Gastrocnemius medialis (tissue), 4 donors: ENCODE measurements at regions of chr3 and their contacts with region 1.

Region 1: GRCh38 chr3:125079675-125080045 is 23.9 kb upstream of the HEG1 start:
- DNase-seq: no peak
- ATAC-seq: peak; percentile 89 to 92
- H3K4me3 ChIP-seq: no peak overlapping the region
- H3K27ac ChIP-seq: peak overlapping the region; percentile 51 to 73 (median 60)
- H3K4me1 ChIP-seq: peaks cover 0 to 4% of the 10 kb centered on the region in 2 donors
- H3K27me3 ChIP-seq: no peaks in the 10 kb centered on the region
- CTCF ChIP-seq: no peak
- POLR2A ChIP-seq: no peak

Region 2: GRCh38 chr3:125024817-125025216 is 54.8 kb before region 1 on chr3:
- in situ Hi-C with region 1: no loop called
- intact Hi-C with region 1: loop called (anchors 2 kb)
- DNase-seq: peak; percentile 82 to 91
- ATAC-seq: peak; percentile 98 to 99
- H3K4me3 ChIP-seq: no peak overlapping the region
- H3K27ac ChIP-seq: peak overlapping the region; percentile 40 to 75 (median 58)
- H3K4me1 ChIP-seq: peaks cover 17 to 30% of the 10 kb centered on the region in 2 donors
- H3K27me3 ChIP-seq: no peaks in the 10 kb centered on the region
- CTCF ChIP-seq: no peak
- POLR2A ChIP-seq: no peak

Region 3: DNA sequence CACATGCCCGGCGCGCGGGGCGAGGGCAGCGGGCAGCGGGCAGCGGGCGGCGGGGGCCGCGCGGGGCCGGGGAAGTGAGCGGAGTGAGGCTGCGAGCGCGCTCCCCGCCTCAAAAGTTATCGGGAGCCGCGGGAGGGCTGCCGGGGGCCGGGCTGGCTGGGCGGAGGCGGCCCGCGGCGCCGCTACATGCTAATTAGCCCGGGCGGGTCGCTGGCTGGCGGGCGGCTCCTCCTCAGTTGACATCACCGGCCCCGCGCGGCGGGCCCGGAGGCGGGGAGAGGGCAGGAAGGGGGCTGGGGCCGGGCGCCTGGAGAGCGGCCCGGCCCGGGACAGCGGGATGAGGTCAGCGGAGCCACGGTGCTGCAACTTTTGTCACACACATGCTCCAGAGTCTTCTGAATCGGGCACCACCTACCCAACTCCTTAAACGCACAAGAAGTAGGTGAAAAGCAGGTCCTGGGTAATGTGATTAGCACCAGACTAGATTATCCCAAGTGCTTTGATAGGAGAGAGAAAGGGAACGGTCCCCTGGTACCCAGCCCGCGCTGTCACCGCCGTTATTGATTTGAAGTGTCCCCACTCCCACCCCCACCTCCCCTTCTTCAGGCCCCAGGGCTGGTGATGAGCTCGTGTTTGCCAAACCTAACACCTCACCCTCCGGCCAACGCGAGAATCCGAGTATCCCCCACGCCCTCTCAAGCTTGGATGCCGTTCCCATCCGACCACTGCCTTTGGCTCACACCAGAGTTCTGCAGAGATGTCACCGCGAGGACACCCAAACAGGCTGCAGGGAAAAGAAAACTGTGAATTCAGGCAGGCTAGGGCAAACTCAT is 23.5 kb before region 1 on chr3 and contains the start of gene HEG1:
- in situ Hi-C with region 1: no loop called
- intact Hi-C with region 1: loop called (anchors 1 kb)
- DNase-seq: peak; percentile 80 to 89
- ATAC-seq: peak; percentile 65 to 73
- H3K4me3 ChIP-seq: peak within 1 kb of the TSS; percentile 69 to 76 (median 73)
- H3K27ac ChIP-seq: peak within 1 kb of the TSS; percentile 84 to 89 (median 89)
- H3K4me1 ChIP-seq: peaks cover 41 to 57% of the 10 kb centered on the region in 2 donors
- H3K27me3 ChIP-seq: no peaks in the 10 kb centered on the region
- CTCF ChIP-seq: no peak
- POLR2A ChIP-seq: peak; percentile 75 to 85
- total RNA-seq, gene HEG1: 9.8 to 27.1 (median 17.6) TPM

Region 4: GRCh38 chr3:125062888-125063618 is 16.6 kb before region 1 on chr3:
- in situ Hi-C with region 1: no loop called
- intact Hi-C with region 1: loop called (anchors 1 kb)
- DNase-seq: no peak
- ATAC-seq: no peak
- H3K4me3 ChIP-seq: no peak overlapping the region
- H3K27ac ChIP-seq: peak overlapping the region in 3 of 4 donors; percentile 78 to 85 (median 79)
- H3K4me1 ChIP-seq: peaks cover 30 to 37% of the 10 kb centered on the region in 2 donors
- H3K27me3 ChIP-seq: no peaks in the 10 kb centered on the region
- CTCF ChIP-seq: no peak
- POLR2A ChIP-seq: no peak

Region 5: GRCh38 chr3:125179143-125179883 is 99.7 kb after region 1 on chr3:
- in situ Hi-C with region 1: no loop called
- intact Hi-C with region 1: no loop called
- DNase-seq: no peak
- ATAC-seq: no peak
- H3K4me3 ChIP-seq: no peak overlapping the region
- H3K27ac ChIP-seq: no peak overlapping the region
- H3K4me1 ChIP-seq: no peaks in the 10 kb centered on the region
- H3K27me3 ChIP-seq: no peaks in the 10 kb centered on the region
- CTCF ChIP-seq: no peak
- POLR2A ChIP-seq: no peak

Region 6: DNA sequence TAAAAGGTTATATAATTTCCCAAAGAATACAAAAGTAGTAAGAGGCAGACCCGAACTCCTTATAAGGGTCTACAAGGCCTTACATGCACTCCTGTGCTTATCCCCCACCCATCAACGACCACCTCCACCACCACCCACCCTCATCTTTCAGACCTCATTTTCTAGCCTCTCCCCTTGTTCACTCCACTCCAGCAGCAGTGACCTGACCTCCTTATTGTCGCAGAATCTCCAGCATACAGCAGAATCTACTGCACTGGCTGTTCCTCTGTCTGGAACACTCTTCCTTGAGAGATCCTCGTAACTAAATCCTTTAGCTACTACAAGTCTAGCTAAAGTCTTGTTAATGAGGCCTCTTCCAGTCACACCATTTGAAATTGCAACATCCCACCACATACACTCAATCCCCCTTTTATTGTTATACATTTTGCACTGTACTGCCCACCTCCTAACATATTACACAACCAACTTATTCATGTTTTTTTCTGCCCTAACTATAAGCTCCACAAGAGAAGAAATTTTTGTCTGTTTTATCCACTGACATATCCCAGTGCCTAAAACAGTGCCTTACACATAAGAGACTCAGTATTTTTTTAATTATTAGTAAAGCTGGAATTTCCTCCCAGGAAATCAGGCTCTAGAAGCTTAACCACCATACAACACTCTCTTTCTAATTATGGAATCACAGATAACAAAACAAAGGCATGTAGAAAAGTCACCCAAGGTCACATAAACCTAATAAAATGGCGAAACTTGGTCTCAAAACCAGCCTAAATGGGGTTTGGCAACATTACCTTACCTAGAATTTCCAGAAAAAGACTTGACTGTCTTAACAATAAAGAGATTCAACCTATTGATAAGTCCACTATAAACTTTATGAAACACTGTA is 255.3 kb after region 1 on chr3:
- in situ Hi-C with region 1: no loop called
- intact Hi-C with region 1: no loop called
- DNase-seq: no peak
- ATAC-seq: no peak
- H3K4me3 ChIP-seq: no peak overlapping the region
- H3K27ac ChIP-seq: peak overlapping the region in 1 of 4 donors; percentile 29
- H3K4me1 ChIP-seq: peaks cover 50 to 54% of the 10 kb centered on the region in 2 donors
- H3K27me3 ChIP-seq: no peaks in the 10 kb centered on the region
- CTCF ChIP-seq: no peak
- POLR2A ChIP-seq: no peak